Caco-2 (cell line): ENCODE measurements at regions of chr11 and their contacts with region 1.

Region 1: DNA sequence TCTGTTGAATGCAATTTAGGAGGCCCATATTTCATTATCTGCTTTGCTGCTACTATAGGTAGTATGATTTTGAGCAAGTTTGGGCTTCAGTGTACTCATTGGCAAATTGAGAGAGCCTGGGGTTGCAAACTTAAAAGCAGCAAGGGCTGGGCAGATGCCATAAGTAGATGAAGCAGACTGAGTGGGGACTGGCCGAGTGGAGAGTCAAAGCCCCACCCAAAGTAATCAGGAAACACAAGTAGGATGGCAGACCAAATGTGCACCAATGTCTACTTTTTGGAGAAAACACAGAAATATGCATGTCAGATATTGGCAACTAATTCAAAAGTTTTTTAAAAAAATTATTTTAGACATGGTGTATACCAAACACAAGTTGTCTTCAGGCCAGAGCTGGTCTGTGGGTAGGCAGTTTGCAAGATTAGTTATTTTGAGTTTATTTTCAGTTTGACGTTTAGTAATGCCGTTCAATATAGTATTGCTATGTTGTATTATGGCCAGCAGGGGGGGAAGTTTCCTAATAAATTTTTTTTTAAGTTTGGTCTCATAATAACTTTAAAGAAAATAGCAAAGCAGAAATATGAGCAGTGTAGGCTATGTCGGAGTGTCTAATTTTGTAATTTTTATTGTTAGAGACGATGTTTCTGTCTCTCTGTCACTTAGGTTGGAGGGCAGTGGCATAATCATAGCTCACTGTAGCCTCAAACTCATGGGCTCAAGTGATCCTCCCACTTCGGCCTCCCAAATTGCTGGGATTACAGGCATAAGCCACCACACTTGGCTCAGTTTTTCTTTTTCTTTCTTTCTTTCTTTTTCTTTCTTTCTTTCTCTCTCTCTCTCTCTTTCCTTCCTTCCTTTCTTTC is 105.1 kb downstream of the HIPK3 start:
- DNase-seq: peak in 1 of 2 experiments; percentile 34
- H3K4me3 ChIP-seq: no peak overlapping the region
- H3K4me3 Mint-ChIP-seq: no peak overlapping the region
- H3K27ac Mint-ChIP-seq: no peak overlapping the region
- H3K4me1 ChIP-seq: no peaks in the 10 kb centered on the region
- H3K4me1 Mint-ChIP-seq: no peaks in the 10 kb centered on the region
- H3K27me3 ChIP-seq: no peaks in the 10 kb centered on the region
- H3K27me3 Mint-ChIP-seq: peaks cover 2% of the 10 kb centered on the region
- CTCF ChIP-seq: peak; percentile 45 to 76

Region 2: GRCh38 chr11:33437529-33437928 is 75.2 kb after region 1 on chr11:
- CTCF ChIA-PET with region 1: interaction called, 4 read pairs
- POLR2A ChIA-PET with region 1: no interaction called
- intact Hi-C with region 1: loop called (anchors 1 kb)
- DNase-seq: peak; percentile 65 to 80
- H3K4me3 ChIP-seq: no peak overlapping the region
- H3K4me3 Mint-ChIP-seq: peak overlapping the region; percentile 29
- H3K27ac Mint-ChIP-seq: no peak overlapping the region
- H3K4me1 ChIP-seq: peaks cover 15% of the 10 kb centered on the region
- H3K4me1 Mint-ChIP-seq: peaks cover 15% of the 10 kb centered on the region
- H3K27me3 ChIP-seq: no peaks in the 10 kb centered on the region
- H3K27me3 Mint-ChIP-seq: no peaks in the 10 kb centered on the region
- CTCF ChIP-seq: no peak

Region 3: GRCh38 chr11:33542921-33543320 is 180.6 kb after region 1 on chr11:
- CTCF ChIA-PET with region 1: no interaction called
- POLR2A ChIA-PET with region 1: no interaction called
- intact Hi-C with region 1: loop called (anchors 2 kb)
- DNase-seq: peak; percentile 61
- H3K4me3 ChIP-seq: no peak overlapping the region
- H3K4me3 Mint-ChIP-seq: no peak overlapping the region
- H3K27ac Mint-ChIP-seq: no peak overlapping the region
- H3K4me1 ChIP-seq: no peaks in the 10 kb centered on the region
- H3K4me1 Mint-ChIP-seq: peaks cover 4% of the 10 kb centered on the region
- H3K27me3 ChIP-seq: no peaks in the 10 kb centered on the region
- H3K27me3 Mint-ChIP-seq: peaks cover 25% of the 10 kb centered on the region
- CTCF ChIP-seq: peak; percentile 44 to 81

Region 4: DNA sequence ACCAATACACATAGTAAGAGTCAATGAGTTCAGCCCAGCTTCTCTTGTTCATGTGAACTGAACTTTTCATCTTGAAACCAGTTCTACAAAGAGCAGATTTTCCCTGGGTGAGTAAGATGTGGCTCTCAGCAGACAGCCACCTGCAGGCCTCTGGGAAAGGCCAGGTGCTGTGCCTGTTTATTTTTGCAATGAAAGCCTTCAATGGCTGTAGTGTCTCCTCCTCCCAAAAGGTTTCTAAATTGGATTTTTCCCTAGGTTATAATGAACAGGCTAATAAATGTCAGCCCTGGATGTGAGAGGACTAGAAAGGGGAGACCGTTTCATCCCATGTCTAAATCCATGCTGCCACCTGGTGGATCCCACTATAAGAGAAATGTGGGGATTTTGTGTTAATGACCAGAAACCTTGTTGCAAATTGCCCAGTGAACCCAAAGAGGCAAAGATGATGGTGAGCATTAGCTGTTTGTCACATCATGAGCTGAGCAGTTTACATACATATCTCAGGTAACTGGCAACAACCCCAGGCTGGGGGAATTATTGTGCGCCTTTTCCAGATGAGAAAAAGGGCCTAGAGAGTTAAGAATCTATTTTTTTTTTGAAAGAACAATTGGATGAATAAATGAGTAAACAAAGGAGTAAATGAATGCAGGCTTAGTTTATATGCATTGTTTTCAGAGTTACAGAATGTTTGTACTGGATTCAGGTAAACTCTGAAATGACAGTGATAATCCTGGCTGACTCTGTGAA is 325.6 kb after region 1 on chr11:
- CTCF ChIA-PET with region 1: interaction called, 7 read pairs
- POLR2A ChIA-PET with region 1: no interaction called
- intact Hi-C with region 1: loop called (anchors 1 kb)
- DNase-seq: peak; percentile 56 to 67
- H3K4me3 ChIP-seq: no peak overlapping the region
- H3K4me3 Mint-ChIP-seq: no peak overlapping the region
- H3K27ac Mint-ChIP-seq: no peak overlapping the region
- H3K4me1 ChIP-seq: peaks cover 14% of the 10 kb centered on the region
- H3K4me1 Mint-ChIP-seq: peaks cover 6% of the 10 kb centered on the region
- H3K27me3 ChIP-seq: no peaks in the 10 kb centered on the region
- H3K27me3 Mint-ChIP-seq: no peaks in the 10 kb centered on the region
- CTCF ChIP-seq: peak; percentile 74 to 82

Region 5: GRCh38 chr11:33736148-33736809 is 374.0 kb after region 1 on chr11 and contains the start of gene CD59:
- CTCF ChIA-PET with region 1: interaction called, 7 read pairs
- POLR2A ChIA-PET with region 1: no interaction called
- intact Hi-C with region 1: loop called (anchors 5 kb)
- DNase-seq: peak; percentile 96 to 98
- H3K4me3 ChIP-seq: peak within 1 kb of the TSS; percentile 86
- H3K4me3 Mint-ChIP-seq: peak within 1 kb of the TSS; percentile 84
- H3K27ac Mint-ChIP-seq: peak within 1 kb of the TSS; percentile 84
- H3K4me1 ChIP-seq: peaks cover 22% of the 10 kb centered on the region
- H3K4me1 Mint-ChIP-seq: peaks cover 24% of the 10 kb centered on the region
- H3K27me3 ChIP-seq: no peaks in the 10 kb centered on the region
- H3K27me3 Mint-ChIP-seq: no peaks in the 10 kb centered on the region
- CTCF ChIP-seq: peak in 1 of 2 experiments; percentile 4
- total RNA-seq, gene CD59: 149 and 152 TPM in 2 replicates

Region 6: DNA sequence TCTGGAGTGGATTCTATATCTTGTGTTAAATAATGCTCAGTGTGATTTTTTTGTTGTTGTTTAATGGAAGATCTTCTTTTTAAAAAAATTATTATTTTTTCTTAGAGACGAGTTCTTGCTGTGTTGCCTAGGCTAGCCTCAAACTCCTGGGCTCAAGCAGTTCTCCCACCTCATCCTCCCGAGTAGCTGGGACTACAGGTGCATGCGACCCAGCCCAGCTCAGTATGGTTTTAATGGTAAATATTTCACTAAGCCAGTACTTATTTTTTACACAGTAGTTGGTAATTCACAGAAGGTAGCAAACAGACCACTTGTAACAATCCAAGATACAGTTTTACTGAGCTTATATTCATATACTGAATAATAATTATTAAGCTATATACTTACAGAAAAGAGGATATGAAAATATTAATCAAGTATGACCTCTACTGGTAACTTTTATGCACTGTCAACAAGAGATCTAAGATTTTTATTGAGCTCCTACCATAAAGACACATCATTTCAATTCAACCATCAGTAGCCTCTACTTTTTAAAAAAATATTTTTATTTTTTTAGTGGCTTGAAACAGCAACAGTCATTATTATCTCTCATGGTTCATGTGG is 380.1 kb after region 1 on chr11:
- CTCF ChIA-PET with region 1: interaction called, 13 read pairs
- POLR2A ChIA-PET with region 1: no interaction called
- intact Hi-C with region 1: loop called (anchors 5 kb)
- DNase-seq: no peak
- H3K4me3 ChIP-seq: no peak overlapping the region
- H3K4me3 Mint-ChIP-seq: no peak overlapping the region
- H3K27ac Mint-ChIP-seq: no peak overlapping the region
- H3K4me1 ChIP-seq: peaks cover under 1% of the 10 kb centered on the region
- H3K4me1 Mint-ChIP-seq: peaks cover 12% of the 10 kb centered on the region
- H3K27me3 ChIP-seq: no peaks in the 10 kb centered on the region
- H3K27me3 Mint-ChIP-seq: no peaks in the 10 kb centered on the region
- CTCF ChIP-seq: peak; percentile 16 to 41

Region 7: DNA sequence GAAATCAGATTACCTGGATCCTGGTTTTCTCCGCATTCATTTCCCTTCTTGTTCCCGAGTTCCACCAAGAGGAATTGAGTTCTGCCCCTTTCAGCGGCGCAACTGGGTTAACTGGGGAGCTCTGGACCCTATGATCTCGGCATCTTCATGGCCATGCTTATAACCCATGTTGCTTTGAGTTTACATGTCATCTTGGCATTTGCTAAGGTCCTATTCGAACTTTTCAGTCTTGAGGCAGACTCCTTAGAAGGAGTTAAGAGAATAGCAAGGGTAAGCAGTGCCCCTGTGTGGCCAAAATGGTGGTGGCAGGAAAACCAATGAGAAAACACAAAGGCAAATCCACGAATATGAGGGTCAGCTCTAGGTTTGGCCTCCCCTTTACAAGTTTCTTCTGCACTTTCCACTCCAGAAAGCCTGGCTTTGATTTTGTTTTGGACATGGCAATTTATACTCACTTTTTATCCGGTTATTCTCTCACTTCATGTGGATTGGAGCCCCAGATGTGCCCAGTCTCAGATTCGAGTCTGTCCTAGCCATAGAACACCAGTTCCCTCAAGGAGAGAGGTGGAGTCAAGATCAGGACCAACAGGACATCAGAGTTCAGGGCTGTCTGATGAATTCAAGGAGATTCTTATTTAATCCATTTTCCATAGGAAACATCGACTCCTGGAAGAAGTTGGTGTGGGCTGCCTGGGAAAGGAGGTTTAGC is 467.3 kb after region 1 on chr11:
- CTCF ChIA-PET with region 1: no interaction called
- POLR2A ChIA-PET with region 1: no interaction called
- intact Hi-C with region 1: loop called (anchors 2 kb)
- DNase-seq: peak; percentile 59 to 65
- H3K4me3 ChIP-seq: peak overlapping the region; percentile 0; the same call in 1 of the 2 replicates
- H3K4me3 Mint-ChIP-seq: peak overlapping the region; percentile 62
- H3K27ac Mint-ChIP-seq: no peak overlapping the region
- H3K4me1 ChIP-seq: peaks cover 7% of the 10 kb centered on the region; the same call in 1 of the 2 replicates
- H3K4me1 Mint-ChIP-seq: no peaks in the 10 kb centered on the region
- H3K27me3 ChIP-seq: peaks cover 2% of the 10 kb centered on the region
- H3K27me3 Mint-ChIP-seq: peaks cover 17% of the 10 kb centered on the region
- CTCF ChIP-seq: peak; percentile 73 to 77